ENCODE measurements at regions of chr4 and their contacts with region 1.

Region 1: DNA sequence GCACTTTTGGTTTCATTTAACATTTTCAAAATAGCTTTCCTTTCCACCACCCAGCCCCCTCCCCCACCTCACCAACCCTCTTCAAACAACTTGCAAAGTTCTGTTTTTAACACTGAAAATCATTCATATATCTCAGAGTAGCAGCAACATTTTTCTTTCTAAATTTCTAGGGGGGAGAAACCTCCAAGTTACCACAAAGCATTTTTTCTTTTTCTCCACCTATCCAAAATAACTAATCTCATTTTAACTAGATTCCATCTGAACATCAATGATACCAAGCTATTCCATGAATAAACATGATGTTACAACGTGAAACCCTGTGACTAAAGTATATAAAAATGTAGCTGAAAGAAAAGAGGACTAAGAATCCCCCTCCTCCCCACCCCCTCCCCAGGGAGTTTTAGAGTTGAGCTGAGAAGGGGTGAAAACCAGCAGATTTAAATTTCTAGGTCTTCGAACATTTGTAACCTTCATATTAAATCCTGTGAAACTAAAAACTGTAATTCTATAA is 5.2 kb downstream of the LDB2 start:
- DNase-seq: no peak
- ATAC-seq: no peak
- H3K4me3 ChIP-seq: no peak overlapping the region
- H3K4me3 Mint-ChIP-seq: peak overlapping the region in 2 of 3 donors; percentile 4 to 50
- H3K27ac ChIP-seq: no peak overlapping the region
- H3K27ac Mint-ChIP-seq: peak overlapping the region; percentile 56 to 57
- H3K4me1 ChIP-seq: peaks cover 13 to 67% of the 10 kb centered on the region in 2 experiments
- H3K4me1 Mint-ChIP-seq: peaks cover 44 to 52% (median 46%) of the 10 kb centered on the region in 3 donors
- H3K27me3 ChIP-seq: no peaks in the 10 kb centered on the region
- H3K27me3 Mint-ChIP-seq: peaks cover 0 to 4% of the 10 kb centered on the region in 2 donors

Region 2: DNA sequence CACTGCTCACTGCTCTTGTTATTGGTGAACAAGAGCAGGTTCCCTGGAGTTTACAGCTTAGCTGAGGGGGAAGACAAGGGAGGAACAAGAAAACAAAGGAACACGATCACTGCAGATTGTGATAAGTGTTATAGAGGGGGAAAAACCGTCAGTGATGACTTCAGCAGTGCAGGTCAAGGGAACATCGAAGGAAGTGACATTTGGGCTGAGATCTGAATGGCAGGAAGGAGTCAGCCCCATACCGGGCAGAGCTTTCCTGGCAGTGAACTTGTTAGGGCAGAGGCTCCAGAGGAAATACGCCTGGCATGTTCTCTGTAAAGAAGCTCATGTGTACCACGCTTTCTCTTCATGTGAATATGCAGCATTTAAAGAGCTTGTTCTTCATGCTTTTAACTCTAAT is 72.9 kb before region 1 on chr4:
- CTCF ChIA-PET with region 1: no interaction called
- POLR2A ChIA-PET with region 1: no interaction called
- DNase-seq: no peak
- ATAC-seq: no peak
- H3K4me3 ChIP-seq: no peak overlapping the region
- H3K4me3 Mint-ChIP-seq: no peak overlapping the region
- H3K27ac ChIP-seq: no peak overlapping the region
- H3K27ac Mint-ChIP-seq: no peak overlapping the region
- H3K4me1 ChIP-seq: peaks cover 0 to 2% of the 10 kb centered on the region in 2 experiments
- H3K4me1 Mint-ChIP-seq: no peaks in the 10 kb centered on the region
- H3K27me3 ChIP-seq: no peaks in the 10 kb centered on the region
- H3K27me3 Mint-ChIP-seq: peaks cover 0 to 4% of the 10 kb centered on the region in 2 donors

Region 3: GRCh38 chr4:16875487-16875886 is 17.7 kb before region 1 on chr4:
- CTCF ChIA-PET with region 1: no interaction called
- POLR2A ChIA-PET with region 1: interaction called in 1 of 2 experiments, 12 read pairs
- DNase-seq: no peak
- ATAC-seq: no peak
- H3K4me3 ChIP-seq: no peak overlapping the region
- H3K4me3 Mint-ChIP-seq: no peak overlapping the region
- H3K27ac ChIP-seq: no peak overlapping the region
- H3K27ac Mint-ChIP-seq: no peak overlapping the region
- H3K4me1 ChIP-seq: no peaks in the 10 kb centered on the region
- H3K4me1 Mint-ChIP-seq: no peaks in the 10 kb centered on the region
- H3K27me3 ChIP-seq: no peaks in the 10 kb centered on the region
- H3K27me3 Mint-ChIP-seq: no peaks in the 10 kb centered on the region

Region 4: DNA sequence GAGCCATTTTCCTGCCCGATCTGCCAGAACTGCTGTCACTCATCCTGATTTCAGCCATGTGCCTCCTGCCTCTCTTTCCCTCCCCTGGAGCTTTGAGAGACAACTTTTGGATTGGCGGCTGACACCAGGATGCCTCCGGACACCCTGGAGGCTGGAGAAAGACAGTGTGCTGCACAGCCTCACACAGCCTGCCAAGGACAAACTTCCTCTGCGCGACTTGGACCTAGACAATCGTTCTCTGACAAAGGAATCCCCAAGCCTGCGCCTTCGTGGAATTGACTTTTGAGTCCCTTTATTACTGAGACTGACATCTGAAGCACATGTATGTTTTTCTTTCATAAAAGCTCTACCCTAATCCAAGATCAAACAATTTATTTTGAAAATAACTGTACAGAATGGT is 16.1 kb after region 1 on chr4:
- CTCF ChIA-PET with region 1: no interaction called
- POLR2A ChIA-PET with region 1: no interaction called
- DNase-seq: no peak
- ATAC-seq: no peak
- H3K4me3 ChIP-seq: no peak overlapping the region
- H3K4me3 Mint-ChIP-seq: no peak overlapping the region
- H3K27ac ChIP-seq: no peak overlapping the region
- H3K27ac Mint-ChIP-seq: no peak overlapping the region
- H3K4me1 ChIP-seq: no peaks in the 10 kb centered on the region
- H3K4me1 Mint-ChIP-seq: no peaks in the 10 kb centered on the region
- H3K27me3 ChIP-seq: peaks cover 0 to 3% of the 10 kb centered on the region in 2 experiments
- H3K27me3 Mint-ChIP-seq: peaks cover 0 to 3% of the 10 kb centered on the region in 2 donors